Dorsolateral prefrontal cortex (tissue), 120 donors: ENCODE measurements at regions of chr11 and their contacts with region 1.

Region 1: DNA sequence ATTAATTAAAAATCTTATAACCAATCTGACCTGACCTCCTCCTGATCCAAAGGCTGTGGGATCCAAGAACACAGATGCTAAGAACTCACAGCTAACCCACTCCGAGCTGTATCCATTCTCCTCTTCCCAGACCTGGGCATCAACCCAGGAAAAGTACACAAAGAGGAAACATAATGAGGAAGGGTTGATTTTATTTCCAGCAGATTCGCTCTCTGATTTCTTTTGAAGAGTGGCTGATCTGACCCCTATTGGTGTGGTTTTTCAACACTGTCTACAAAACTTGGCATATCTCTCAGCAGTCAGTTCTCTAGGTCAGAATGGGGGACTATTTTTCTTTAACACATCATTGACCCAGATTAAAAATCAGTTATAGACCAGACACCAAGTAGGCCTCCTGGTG is 201.9 kb upstream of the UBASH3B start:
- DNase-seq: no peak
- H3K4me3 ChIP-seq: peak overlapping the region in 3 of 59 donors; percentile 4 to 20 (median 16)
- H3K27ac ChIP-seq: peak overlapping the region in 19 of 59 donors; percentile 0 to 73 (median 26)
- H3K27me3 ChIP-seq: no peaks in the 10 kb centered on the region
- CTCF ChIP-seq: peak in 43 of 56 donors; percentile 20 to 65 (median 40)

Region 2: GRCh38 chr11:122215244-122215992 is 238.2 kb before region 1 on chr11:
- intact Hi-C with region 1: loop called in 1 of 2 experiments (anchors 5 kb)
- DNase-seq: peak; percentile 32 to 87 (median 76)
- H3K4me3 ChIP-seq: no peak overlapping the region
- H3K27ac ChIP-seq: peak overlapping the region; percentile 21 to 99 (median 96)
- H3K27me3 ChIP-seq: no peaks in the 10 kb centered on the region
- CTCF ChIP-seq: peak; percentile 44 to 97 (median 89)